Activated CD4-positive, alpha-beta T cell treated with anti-CD3 and anti-CD28 coated beads, Interleukin-2, amount 10 ng/mL, durations not matched to agents 7 days and 5 days (primary cell): ENCODE measurements at regions of chr1 and their contacts with region 1.

Region 1: GRCh38 chr1:226407497-226408284 is at the start of gene PARP1:
- DNase-seq: peak; percentile 88
- H3K4me3 Mint-ChIP-seq: peak within 1 kb of the TSS; percentile 88
- H3K27ac Mint-ChIP-seq: peak within 1 kb of the TSS; percentile 93
- H3K4me1 Mint-ChIP-seq: peaks cover 43% of the 10 kb centered on the region
- H3K27me3 Mint-ChIP-seq: peaks cover 6% of the 10 kb centered on the region
- total RNA-seq, gene PARP1: 167 to 187 TPM

Region 2: DNA sequence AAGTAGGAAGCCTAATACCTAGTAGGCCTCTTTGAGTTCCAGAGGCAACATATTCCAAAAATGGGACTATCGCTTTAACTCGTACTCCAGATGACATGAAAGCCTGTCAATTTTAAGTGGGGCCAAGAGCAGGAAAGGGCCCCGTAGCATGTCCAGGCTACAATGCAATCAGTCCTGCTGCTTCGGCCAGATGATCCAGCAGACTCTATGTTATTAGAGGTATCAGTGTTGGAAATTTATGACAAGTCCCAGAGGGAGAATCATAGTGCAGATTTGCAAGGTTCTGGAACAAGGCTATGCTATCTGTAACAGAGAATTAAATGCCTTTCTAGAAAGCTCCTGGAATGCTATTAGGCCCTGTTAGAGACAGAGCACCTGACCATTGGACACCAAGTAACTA is 686.8 kb before region 1 on chr1:
- CTCF ChIA-PET with region 1: no interaction called
- POLR2A ChIA-PET with region 1: interaction called, 13 read pairs
- DNase-seq: no peak
- H3K4me3 Mint-ChIP-seq: no peak overlapping the region
- H3K27ac Mint-ChIP-seq: no peak overlapping the region
- H3K4me1 Mint-ChIP-seq: no peaks in the 10 kb centered on the region
- H3K27me3 Mint-ChIP-seq: no peaks in the 10 kb centered on the region

Region 3: DNA sequence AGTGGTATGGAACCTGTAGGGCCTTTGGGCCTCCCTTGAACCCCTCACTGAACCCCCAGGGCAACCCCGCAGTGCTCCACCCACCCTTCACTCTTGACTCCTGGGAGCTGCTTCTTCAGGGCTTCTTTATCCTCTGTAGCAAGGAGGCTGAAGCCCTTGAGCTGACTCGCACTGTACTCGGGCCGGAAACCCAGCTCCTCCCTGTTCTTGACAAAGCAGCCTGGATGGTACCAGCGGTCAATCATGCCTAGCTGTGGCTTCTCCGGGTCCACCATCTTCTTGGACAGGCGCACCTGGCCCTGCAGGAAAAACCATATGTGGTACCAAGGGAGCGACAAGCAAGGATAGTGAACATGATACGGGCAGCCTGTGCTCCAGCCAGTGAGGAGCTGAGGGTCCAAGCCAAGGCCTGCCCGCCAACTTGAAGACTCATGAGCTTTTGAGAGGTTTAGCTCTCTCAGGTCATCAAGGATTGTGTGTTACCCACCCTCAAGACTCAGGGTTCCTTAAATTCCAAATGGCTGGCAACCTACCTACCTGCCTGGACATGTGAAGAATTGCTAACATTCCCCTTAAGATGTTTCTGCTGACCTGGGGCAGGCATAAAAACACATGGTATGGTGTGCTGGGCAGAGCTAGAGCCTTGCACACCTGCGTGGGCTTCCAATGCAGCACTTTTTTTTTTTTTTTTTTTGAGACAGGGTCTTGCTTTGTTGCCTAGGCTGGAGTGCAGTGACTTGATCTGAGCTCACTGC is 17.2 kb before region 1 on chr1:
- CTCF ChIA-PET with region 1: interaction called, 17 read pairs
- POLR2A ChIA-PET with region 1: no interaction called
- DNase-seq: no peak
- H3K4me3 Mint-ChIP-seq: no peak overlapping the region
- H3K27ac Mint-ChIP-seq: no peak overlapping the region
- H3K4me1 Mint-ChIP-seq: peaks cover 2% of the 10 kb centered on the region
- H3K27me3 Mint-ChIP-seq: no peaks in the 10 kb centered on the region

Region 4: DNA sequence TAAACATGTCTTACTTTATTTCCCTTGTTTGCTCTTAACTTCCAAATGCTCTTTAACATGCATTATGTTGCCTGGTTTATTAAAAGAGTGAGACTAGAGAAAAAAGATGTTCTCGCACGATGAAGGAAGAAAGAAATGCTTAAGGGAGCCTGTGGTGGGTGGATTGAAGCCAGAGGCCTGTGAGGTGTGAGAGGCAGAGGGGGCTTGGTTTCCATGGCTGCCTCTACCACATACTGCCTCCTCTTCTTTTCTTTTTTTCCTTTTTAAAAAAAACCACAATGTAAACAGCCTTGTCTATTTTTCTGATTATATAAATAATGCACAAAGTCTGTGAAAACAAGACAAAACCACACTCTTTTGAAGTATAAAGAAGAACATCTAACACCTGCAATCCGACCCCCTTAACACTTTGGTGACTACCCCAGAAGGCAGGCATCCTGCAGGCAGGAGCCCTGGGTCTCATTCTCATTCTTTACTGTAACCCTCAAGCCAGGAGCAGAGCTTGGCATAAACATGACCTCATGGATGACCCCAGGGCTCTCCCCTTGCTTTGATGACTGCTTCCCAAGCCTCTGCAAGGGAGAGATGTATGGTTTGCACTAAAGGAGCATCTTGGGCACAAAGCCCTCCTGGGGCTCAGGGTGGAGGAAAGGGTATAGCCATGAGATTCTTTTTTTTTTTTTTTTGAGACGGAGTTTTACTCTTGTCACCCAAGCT is 10.3 kb after region 1 on chr1:
- CTCF ChIA-PET with region 1: interaction called, 16 read pairs
- POLR2A ChIA-PET with region 1: interaction called, 3 read pairs
- DNase-seq: no peak
- H3K4me3 Mint-ChIP-seq: no peak overlapping the region
- H3K27ac Mint-ChIP-seq: no peak overlapping the region
- H3K4me1 Mint-ChIP-seq: peaks cover 7% of the 10 kb centered on the region
- H3K27me3 Mint-ChIP-seq: peaks cover 9% of the 10 kb centered on the region

Region 5: DNA sequence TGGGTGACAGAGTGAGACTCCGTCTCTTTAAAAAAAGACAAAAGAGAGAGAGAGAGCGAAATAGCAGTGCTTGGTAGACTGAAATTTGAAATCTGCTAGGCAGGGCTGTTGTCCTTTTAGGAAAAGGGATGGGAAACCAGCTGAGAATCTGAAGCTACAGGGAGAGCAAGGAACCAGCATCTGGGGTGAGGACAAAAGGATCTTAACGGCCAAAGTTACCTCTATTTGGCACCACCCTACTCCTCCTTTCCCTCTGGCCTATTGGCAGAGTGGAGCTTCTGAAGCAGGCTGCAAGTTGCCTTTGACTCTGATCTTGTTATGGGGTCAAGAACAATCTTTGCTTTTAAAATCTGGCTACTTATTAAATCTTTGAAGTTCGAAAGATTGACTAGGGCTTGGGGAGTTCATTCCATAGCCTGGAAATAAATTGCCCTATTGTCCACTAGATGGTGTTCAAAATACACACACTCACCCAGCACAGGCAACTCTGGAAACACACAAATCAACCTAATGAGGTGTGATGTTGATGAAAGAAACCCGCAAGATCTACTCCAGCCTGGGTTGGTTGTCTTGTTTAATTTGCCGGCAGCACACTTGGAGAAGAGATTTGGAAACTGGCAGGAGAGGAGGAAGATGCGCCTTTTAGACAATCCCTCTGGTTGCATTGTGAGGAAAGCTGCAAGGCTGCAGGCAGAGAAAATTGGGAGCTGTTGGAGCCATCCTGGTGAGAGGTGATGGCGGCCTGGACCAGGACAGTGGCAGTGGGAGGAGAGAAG is 16.7 kb after region 1 on chr1:
- CTCF ChIA-PET with region 1: interaction called, 22 read pairs
- POLR2A ChIA-PET with region 1: interaction called, 5 read pairs
- DNase-seq: peak; percentile 37
- H3K4me3 Mint-ChIP-seq: no peak overlapping the region
- H3K27ac Mint-ChIP-seq: no peak overlapping the region
- H3K4me1 Mint-ChIP-seq: peaks cover 26% of the 10 kb centered on the region
- H3K27me3 Mint-ChIP-seq: peaks cover 2% of the 10 kb centered on the region